ENCODE measurements at regions of chr1 and their contacts with region 1.

Region 1: GRCh38 chr1:61318319-61319125 is 236.2 kb downstream of the NFIA start:
- DNase-seq: peak; percentile 56
- H3K4me3 Mint-ChIP-seq: peak overlapping the region; percentile 45
- H3K27ac Mint-ChIP-seq: peak overlapping the region; percentile 67
- H3K4me1 Mint-ChIP-seq: peaks cover 21% of the 10 kb centered on the region
- H3K27me3 Mint-ChIP-seq: peaks cover 12% of the 10 kb centered on the region

Region 2: DNA sequence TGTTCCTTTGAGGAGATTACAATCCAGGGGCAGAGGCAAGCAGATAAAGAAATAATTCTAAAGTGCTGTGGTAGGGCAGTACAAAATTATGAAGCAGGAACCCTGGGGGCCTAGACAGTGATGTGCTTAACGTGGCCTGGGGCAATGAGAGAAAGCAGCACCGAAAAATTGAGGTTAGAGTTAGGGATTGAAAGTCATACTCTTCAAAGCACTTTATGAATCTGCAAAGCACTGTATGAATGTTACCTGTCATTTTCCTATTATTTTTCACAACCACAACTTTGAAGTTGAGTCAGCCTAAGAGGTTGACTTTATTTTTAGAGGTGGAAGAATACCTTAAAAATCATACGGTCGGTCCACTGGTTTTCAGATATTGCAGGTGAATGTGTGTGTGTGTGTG is 419.5 kb before region 1 on chr1:
- CTCF ChIA-PET with region 1: no interaction called
- intact Hi-C with region 1: loop called (anchors 5 kb)
- DNase-seq: no peak
- H3K4me3 Mint-ChIP-seq: no peak overlapping the region
- H3K27ac Mint-ChIP-seq: no peak overlapping the region
- H3K4me1 Mint-ChIP-seq: peaks cover 2% of the 10 kb centered on the region
- H3K27me3 Mint-ChIP-seq: peaks cover 6% of the 10 kb centered on the region

Region 3: GRCh38 chr1:61157468-61157987 is 161.0 kb before region 1 on chr1:
- CTCF ChIA-PET with region 1: no interaction called
- intact Hi-C with region 1: loop called (anchors 5 kb)
- DNase-seq: no peak
- H3K4me3 Mint-ChIP-seq: no peak overlapping the region
- H3K27ac Mint-ChIP-seq: no peak overlapping the region
- H3K4me1 Mint-ChIP-seq: peaks cover 16% of the 10 kb centered on the region
- H3K27me3 Mint-ChIP-seq: no peaks in the 10 kb centered on the region

Region 4: DNA sequence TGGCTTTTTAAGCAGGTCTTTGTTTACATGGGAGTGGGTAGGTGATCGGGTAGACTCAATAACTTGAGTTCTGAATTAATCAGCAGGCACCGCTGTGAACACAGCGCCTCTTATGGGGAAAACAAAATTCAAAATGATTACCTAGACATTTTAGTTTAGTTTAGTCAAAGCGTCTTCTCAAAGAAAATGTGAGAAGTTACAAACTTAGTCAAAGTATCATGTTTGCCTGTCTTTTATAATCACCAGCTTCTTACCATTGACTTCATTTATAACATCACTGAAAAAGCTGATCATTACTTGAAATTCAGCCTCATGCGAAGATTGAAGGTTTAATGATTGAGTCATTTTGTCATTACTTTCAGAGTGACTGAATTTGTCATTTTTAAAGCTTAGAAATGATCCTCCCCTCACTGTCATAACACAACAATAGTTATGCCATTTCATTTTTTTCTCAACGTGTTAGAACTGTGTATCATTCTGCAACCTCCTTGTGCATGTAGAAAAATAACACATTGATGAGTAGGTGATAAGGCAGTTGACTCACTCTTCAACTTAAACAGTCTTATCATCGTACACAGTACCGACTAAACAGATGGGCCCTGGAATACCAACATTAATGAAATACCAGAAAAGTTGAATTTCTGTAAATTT is 47.6 kb before region 1 on chr1:
- CTCF ChIA-PET with region 1: interaction called, 5 read pairs
- intact Hi-C with region 1: loop called (anchors 1 kb)
- DNase-seq: peak; percentile 24
- H3K4me3 Mint-ChIP-seq: no peak overlapping the region
- H3K27ac Mint-ChIP-seq: peak overlapping the region; percentile 37
- H3K4me1 Mint-ChIP-seq: peaks cover 18% of the 10 kb centered on the region
- H3K27me3 Mint-ChIP-seq: peaks cover 7% of the 10 kb centered on the region

Region 5: GRCh38 chr1:61301824-61302657 is 16.5 kb before region 1 on chr1:
- CTCF ChIA-PET with region 1: interaction called, 4 read pairs
- intact Hi-C with region 1: loop called (anchors 1 kb)
- DNase-seq: peak; percentile 60
- H3K4me3 Mint-ChIP-seq: no peak overlapping the region
- H3K27ac Mint-ChIP-seq: peak overlapping the region; percentile 65
- H3K4me1 Mint-ChIP-seq: peaks cover 19% of the 10 kb centered on the region
- H3K27me3 Mint-ChIP-seq: peaks cover 24% of the 10 kb centered on the region

Region 6: GRCh38 chr1:61332196-61332753 is 13.8 kb after region 1 on chr1:
- CTCF ChIA-PET with region 1: interaction called, 5 read pairs
- intact Hi-C with region 1: loop called (anchors 1 kb)
- DNase-seq: peak; percentile 26
- H3K4me3 Mint-ChIP-seq: no peak overlapping the region
- H3K27ac Mint-ChIP-seq: no peak overlapping the region
- H3K4me1 Mint-ChIP-seq: peaks cover 8% of the 10 kb centered on the region
- H3K27me3 Mint-ChIP-seq: no peaks in the 10 kb centered on the region

Region 7: GRCh38 chr1:61343734-61344420 is 25.4 kb after region 1 on chr1:
- CTCF ChIA-PET with region 1: no interaction called
- intact Hi-C with region 1: no loop called
- DNase-seq: no peak
- H3K4me3 Mint-ChIP-seq: no peak overlapping the region
- H3K27ac Mint-ChIP-seq: no peak overlapping the region
- H3K4me1 Mint-ChIP-seq: no peaks in the 10 kb centered on the region
- H3K27me3 Mint-ChIP-seq: peaks cover 2% of the 10 kb centered on the region

Region 8: GRCh38 chr1:61782771-61783170 is 464.2 kb after region 1 on chr1:
- CTCF ChIA-PET with region 1: no interaction called
- intact Hi-C with region 1: loop called (anchors 5 kb)
- DNase-seq: peak; percentile 82
- H3K4me3 Mint-ChIP-seq: no peak overlapping the region
- H3K27ac Mint-ChIP-seq: peak overlapping the region; percentile 39
- H3K4me1 Mint-ChIP-seq: peaks cover 39% of the 10 kb centered on the region
- H3K27me3 Mint-ChIP-seq: no peaks in the 10 kb centered on the region